OCI-LY7 (cell line): ENCODE measurements at regions of chr4 and their contacts with region 1.

Region 1: GRCh38 chr4:153643406-153644383 is 40.4 kb upstream of the TLR2 start:
- DNase-seq: peak; percentile 92
- H3K4me3 ChIP-seq: no peak overlapping the region
- H3K27ac ChIP-seq: peak overlapping the region; percentile 50
- H3K4me1 ChIP-seq: peaks cover 33% of the 10 kb centered on the region
- CTCF ChIP-seq: peak; percentile 89

Region 2: DNA sequence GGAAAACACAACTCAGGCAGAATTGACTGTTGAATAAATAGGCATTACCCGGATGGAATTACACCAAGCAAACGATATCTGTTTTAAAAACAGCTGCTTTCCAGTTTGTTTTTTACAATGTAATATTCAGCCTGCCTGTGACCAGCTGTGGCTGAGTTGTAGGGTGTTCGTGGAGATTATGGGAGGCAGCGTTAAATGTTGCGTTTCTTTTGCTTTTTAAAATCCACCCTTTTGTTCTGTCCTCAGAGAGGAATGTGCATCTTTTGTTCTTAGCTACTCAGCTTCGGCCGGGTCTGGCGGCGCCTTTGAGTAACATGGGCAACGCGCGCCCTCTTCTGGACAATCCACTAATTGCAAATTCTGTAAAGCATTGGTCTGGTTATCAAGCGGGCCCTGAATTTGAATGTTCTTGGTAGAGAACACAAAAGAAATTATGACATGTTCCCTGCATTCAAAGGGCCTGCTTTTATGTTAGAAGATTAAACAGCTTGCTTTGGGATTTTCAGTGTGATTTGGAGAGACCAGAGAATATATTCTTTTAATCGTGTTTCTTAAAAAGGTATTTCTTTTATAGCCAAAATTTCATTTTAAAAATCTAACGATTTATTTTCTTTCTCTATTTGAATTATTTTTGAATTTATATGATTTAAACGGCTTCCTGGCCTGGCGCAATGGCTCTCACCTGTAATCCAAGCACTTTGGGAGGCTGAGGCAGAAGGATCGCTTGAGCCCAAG is 515.8 kb before region 1 on chr4:
- CTCF ChIA-PET with region 1: interaction called, 3 read pairs
- POLR2A ChIA-PET with region 1: no interaction called
- intact Hi-C with region 1: loop called (anchors 5 kb)
- DNase-seq: peak; percentile 84
- H3K4me3 ChIP-seq: no peak overlapping the region
- H3K27ac ChIP-seq: no peak overlapping the region
- H3K4me1 ChIP-seq: no peaks in the 10 kb centered on the region
- CTCF ChIP-seq: peak; percentile 98

Region 3: GRCh38 chr4:153155686-153156085 is 488.0 kb before region 1 on chr4:
- CTCF ChIA-PET with region 1: no interaction called
- POLR2A ChIA-PET with region 1: interaction called, 10 read pairs
- intact Hi-C with region 1: no loop called
- DNase-seq: no peak
- H3K4me3 ChIP-seq: no peak overlapping the region
- H3K27ac ChIP-seq: no peak overlapping the region
- H3K4me1 ChIP-seq: peaks cover 23% of the 10 kb centered on the region
- CTCF ChIP-seq: no peak

Region 4: DNA sequence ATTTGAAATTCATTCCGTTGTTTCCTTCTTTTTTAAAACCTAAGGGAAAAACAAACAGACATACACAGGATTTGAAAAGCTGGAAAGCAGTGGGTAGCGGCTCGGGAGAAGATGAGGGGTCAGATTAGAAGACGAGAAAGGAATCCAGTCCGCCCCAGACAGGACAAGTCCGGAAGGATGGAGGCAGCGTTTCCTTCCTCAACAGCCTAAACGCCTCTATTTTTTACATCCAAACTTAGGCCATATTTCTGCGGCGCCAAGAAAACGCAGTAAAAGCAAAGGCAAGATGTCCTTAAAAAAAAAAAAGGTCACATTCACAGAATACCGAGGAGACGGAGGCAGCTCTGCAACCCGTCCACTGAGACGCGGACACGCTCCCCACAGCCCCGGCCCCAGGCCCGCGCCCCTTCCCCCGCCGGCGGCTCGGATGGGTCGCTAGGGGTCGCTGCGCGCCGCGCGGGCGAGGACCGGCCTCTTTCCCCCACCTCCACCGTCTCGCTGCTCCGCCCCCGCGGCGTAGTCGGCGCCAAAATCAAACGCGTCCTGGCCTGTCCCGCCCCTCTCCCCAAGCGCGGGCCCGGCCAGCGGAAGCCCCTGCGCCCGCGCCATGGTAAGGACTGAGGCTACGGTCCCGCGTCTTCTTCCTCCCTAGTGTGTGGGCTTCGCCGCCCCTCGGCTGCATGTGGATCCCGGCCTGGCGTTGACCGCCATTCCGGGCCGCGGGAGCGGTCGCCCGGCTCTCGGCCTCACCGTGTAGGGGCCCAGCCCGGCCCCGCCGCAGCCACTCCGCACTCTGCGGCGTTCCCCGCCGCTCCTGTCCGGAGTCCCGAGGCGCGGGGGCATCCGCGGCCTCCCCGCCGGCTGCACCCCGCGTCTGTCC is 299.3 kb before region 1 on chr4 and contains the start of gene MND1:
- CTCF ChIA-PET with region 1: no interaction called
- POLR2A ChIA-PET with region 1: interaction called, 7 read pairs
- intact Hi-C with region 1: loop called (anchors 1 kb)
- DNase-seq: peak; percentile 95
- H3K4me3 ChIP-seq: peak within 1 kb of the TSS; percentile 87
- H3K27ac ChIP-seq: peak within 1 kb of the TSS; percentile 100
- H3K4me1 ChIP-seq: peaks cover 80% of the 10 kb centered on the region
- CTCF ChIP-seq: peak; percentile 90
- total RNA-seq, gene MND1: 59.4 and 67.9 TPM in 2 replicates

Region 5: GRCh38 chr4:153663089-153663488 is 19.4 kb after region 1 on chr4:
- CTCF ChIA-PET with region 1: no interaction called
- POLR2A ChIA-PET with region 1: no interaction called
- intact Hi-C with region 1: no loop called
- DNase-seq: no peak
- H3K4me3 ChIP-seq: no peak overlapping the region
- H3K27ac ChIP-seq: no peak overlapping the region
- H3K4me1 ChIP-seq: no peaks in the 10 kb centered on the region
- CTCF ChIP-seq: no peak

Region 6: GRCh38 chr4:153750197-153750817 is 106.6 kb after region 1 on chr4:
- CTCF ChIA-PET with region 1: interaction called, 3 read pairs
- POLR2A ChIA-PET with region 1: interaction called, 7 read pairs
- intact Hi-C with region 1: loop called (anchors 1 kb)
- DNase-seq: peak; percentile 83
- H3K4me3 ChIP-seq: no peak overlapping the region
- H3K27ac ChIP-seq: no peak overlapping the region
- H3K4me1 ChIP-seq: no peaks in the 10 kb centered on the region
- CTCF ChIP-seq: peak; percentile 90